ENCODE measurements at regions of chr19 and their contacts with region 1.

Region 1: DNA sequence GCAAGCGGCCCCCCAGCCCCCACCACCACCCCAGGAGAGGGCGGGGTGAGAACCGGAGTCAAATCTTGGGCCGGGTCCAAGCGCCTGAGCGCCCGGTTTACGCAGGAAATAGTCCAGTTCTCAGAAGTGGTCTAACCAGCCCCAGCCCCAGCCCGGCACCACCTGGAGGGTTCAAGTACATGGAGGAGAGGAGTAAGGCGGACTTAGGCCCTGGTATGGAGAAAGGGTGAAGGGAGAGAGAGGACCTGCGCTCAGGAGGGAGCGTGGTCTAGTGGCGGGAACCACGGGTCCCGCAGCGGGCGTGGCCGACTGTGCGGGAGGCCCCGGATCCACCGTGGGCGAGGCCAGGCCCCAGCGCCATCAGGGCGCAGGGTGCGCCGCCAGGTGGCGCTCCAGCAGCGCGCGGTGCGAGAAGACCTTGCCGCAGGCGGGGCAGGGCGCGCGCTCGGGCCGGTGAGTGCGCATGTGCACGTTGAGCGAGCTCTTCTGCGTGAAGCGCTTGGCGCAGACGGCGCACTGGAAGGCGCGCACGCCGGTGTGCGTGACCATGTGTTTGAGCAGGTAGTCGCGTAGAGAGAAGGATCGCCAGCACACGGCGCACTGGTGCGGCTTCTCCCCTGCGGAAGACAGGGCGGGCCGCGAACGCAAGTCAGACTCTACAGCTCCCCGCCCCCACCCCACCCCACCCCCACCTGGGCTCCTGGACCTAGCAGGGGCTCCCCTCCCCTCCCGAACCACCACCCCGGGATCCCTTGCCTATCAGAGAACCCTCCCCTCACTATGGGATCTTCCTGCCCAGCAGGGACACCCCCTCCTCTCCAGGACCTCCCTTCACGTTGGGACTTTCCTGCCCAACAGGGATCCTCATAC is 2.1 kb upstream of the SLC27A5 start:
- DNase-seq: peak; percentile 91 to 99 (median 95)
- ATAC-seq: peak; percentile 98
- H3K4me3 ChIP-seq: peak overlapping the region; percentile 39
- H3K4me3 Mint-ChIP-seq: peak overlapping the region; percentile 73 to 93 (median 84)
- H3K27ac ChIP-seq: peak overlapping the region; percentile 65
- H3K27ac Mint-ChIP-seq: peak overlapping the region; percentile 67 to 94 (median 85)
- H3K4me1 ChIP-seq: peaks cover 17 to 21% of the 10 kb centered on the region in 2 donors
- H3K4me1 Mint-ChIP-seq: peaks cover 17 to 40% (median 27%) of the 10 kb centered on the region in 7 donors
- H3K27me3 ChIP-seq: no peaks in the 10 kb centered on the region
- H3K27me3 Mint-ChIP-seq: no peaks in the 10 kb centered on the region

Region 2: GRCh38 chr19:58475714-58476497 is 38.0 kb before region 1 on chr19 and contains the start of gene ZNF446:
- CTCF ChIA-PET with region 1: no interaction called
- POLR2A ChIA-PET with region 1: no interaction called
- intact Hi-C with region 1: loop called (anchors 1 kb)
- DNase-seq: peak; percentile 84 to 97 (median 96)
- ATAC-seq: peak; percentile 92
- H3K4me3 ChIP-seq: peak within 1 kb of the TSS; percentile 77
- H3K4me3 Mint-ChIP-seq: peak within 1 kb of the TSS; percentile 78 to 99 (median 96)
- H3K27ac ChIP-seq: peak within 1 kb of the TSS; percentile 91
- H3K27ac Mint-ChIP-seq: peak within 1 kb of the TSS; percentile 87 to 100 (median 99)
- H3K4me1 ChIP-seq: peaks cover 14 to 16% of the 10 kb centered on the region in 2 donors
- H3K4me1 Mint-ChIP-seq: peaks cover 6 to 29% (median 17%) of the 10 kb centered on the region in 7 donors
- H3K27me3 ChIP-seq: no peaks in the 10 kb centered on the region
- H3K27me3 Mint-ChIP-seq: no peaks in the 10 kb centered on the region
- total RNA-seq, gene ZNF446: 9.5 to 20.0 (median 15.1) TPM

Region 3: GRCh38 chr19:58531034-58531840 is 17.3 kb after region 1 on chr19:
- CTCF ChIA-PET with region 1: no interaction called
- POLR2A ChIA-PET with region 1: no interaction called
- intact Hi-C with region 1: no loop called
- DNase-seq: no peak
- ATAC-seq: no peak
- H3K4me3 ChIP-seq: no peak overlapping the region
- H3K4me3 Mint-ChIP-seq: no peak overlapping the region
- H3K27ac ChIP-seq: no peak overlapping the region
- H3K27ac Mint-ChIP-seq: no peak overlapping the region
- H3K4me1 ChIP-seq: no peaks in the 10 kb centered on the region
- H3K4me1 Mint-ChIP-seq: no peaks in the 10 kb centered on the region
- H3K27me3 ChIP-seq: no peaks in the 10 kb centered on the region
- H3K27me3 Mint-ChIP-seq: peaks cover 0 to 7% (median 0%) of the 10 kb centered on the region in 5 donors

Region 4: GRCh38 chr19:58558623-58559274 is 44.8 kb after region 1 on chr19:
- CTCF ChIA-PET with region 1: interaction called, 5 read pairs
- POLR2A ChIA-PET with region 1: interaction called, 32 read pairs
- intact Hi-C with region 1: loop called (anchors 1 kb)
- DNase-seq: peak; percentile 99 to 100 (median 100)
- ATAC-seq: peak; percentile 79
- H3K4me3 ChIP-seq: peak overlapping the region; percentile 97
- H3K4me3 Mint-ChIP-seq: peak overlapping the region; percentile 87 to 98 (median 96)
- H3K27ac ChIP-seq: peak overlapping the region; percentile 97
- H3K27ac Mint-ChIP-seq: peak overlapping the region; percentile 93 to 99 (median 98)
- H3K4me1 ChIP-seq: peaks cover 51 to 63% of the 10 kb centered on the region in 2 donors
- H3K4me1 Mint-ChIP-seq: peaks cover 18 to 86% (median 77%) of the 10 kb centered on the region in 7 donors
- H3K27me3 ChIP-seq: no peaks in the 10 kb centered on the region
- H3K27me3 Mint-ChIP-seq: peaks cover 0 to 4% (median 0%) of the 10 kb centered on the region in 5 donors

Region 5: GRCh38 chr19:58581227-58582151 is 67.6 kb after region 1 on chr19:
- CTCF ChIA-PET with region 1: interaction called, 46 read pairs
- POLR2A ChIA-PET with region 1: interaction called, 45 read pairs
- intact Hi-C with region 1: loop called in 1 of 2 experiments (anchors 1 kb)
- DNase-seq: peak; percentile 81 to 91 (median 89)
- ATAC-seq: peak; percentile 100
- H3K4me3 ChIP-seq: no peak overlapping the region
- H3K4me3 Mint-ChIP-seq: peak overlapping the region in 1 of 10 donors; percentile 38
- H3K27ac ChIP-seq: peak overlapping the region; percentile 48
- H3K27ac Mint-ChIP-seq: peak overlapping the region; percentile 7 to 90 (median 78)
- H3K4me1 ChIP-seq: peaks cover 0 to 7% of the 10 kb centered on the region in 2 donors
- H3K4me1 Mint-ChIP-seq: peaks cover 12 to 29% (median 24%) of the 10 kb centered on the region in 7 donors
- H3K27me3 ChIP-seq: no peaks in the 10 kb centered on the region
- H3K27me3 Mint-ChIP-seq: no peaks in the 10 kb centered on the region